ENCODE measurements at regions of chr5 and their contacts with region 1.

Region 1: DNA sequence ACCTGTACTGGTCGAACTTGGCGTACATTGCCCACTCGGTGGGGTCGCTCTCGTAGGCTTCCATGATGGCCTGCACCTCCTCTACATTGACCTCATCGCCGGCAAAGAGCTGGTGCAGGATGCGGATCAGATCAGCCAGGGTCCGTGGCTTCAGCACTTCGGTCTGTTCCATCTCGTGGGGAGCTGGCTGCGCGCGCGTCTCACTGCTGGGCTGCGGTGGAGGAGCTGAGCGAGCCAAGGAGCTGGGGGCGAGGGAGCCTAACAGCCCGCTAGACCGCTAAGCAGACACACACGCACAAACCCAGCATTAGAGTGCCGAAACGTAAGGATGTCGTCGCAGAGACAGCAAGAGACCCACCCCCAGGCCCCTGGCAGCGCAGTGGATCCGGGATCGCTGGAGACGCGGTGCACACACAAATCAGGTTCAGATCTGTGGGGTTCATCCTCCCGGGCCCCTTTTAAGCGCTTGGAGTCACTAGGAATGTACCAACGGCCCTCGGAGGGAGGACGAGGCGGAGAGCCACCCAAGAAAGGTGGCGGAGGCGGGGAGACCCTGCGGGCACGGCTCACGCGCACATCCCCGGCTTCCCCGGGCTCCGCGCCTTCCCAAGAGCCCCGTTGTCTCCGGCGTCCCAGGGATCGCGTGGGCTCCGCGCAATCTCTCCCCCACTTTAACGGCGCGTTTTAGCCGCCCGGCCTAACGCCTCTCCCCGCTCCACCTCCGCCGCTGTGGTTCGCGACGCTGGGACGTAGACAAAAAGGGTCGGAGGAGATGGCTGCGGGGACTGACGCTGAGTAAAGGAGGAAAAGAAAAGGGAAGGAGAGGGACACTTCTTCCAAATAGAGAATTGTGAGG is at the start of gene CDO1:
- DNase-seq: peak; percentile 41 to 84
- H3K4me3 ChIP-seq: peak within 1 kb of the TSS; percentile 70 to 82 (median 72)
- H3K27ac ChIP-seq: peak within 1 kb of the TSS; percentile 72
- H3K4me1 ChIP-seq: peaks cover 0 to 5% (median 1%) of the 10 kb centered on the region in 4 experiments; a peak in 5 of 7 replicates
- H3K27me3 ChIP-seq: peaks cover 0 to 22% (median 12%) of the 10 kb centered on the region in 4 experiments; a peak in 6 of 7 replicates
- CTCF ChIP-seq: no peak
- EP300 ChIP-seq: peak in 1 of 2 experiments; percentile 89; a peak in 1 of 3 replicates
- POLR2A ChIP-seq: peak; percentile 86 to 89
- RAD21 ChIP-seq: no peak
- total RNA-seq, gene CDO1: 25.4 and 26.1 TPM in 2 replicates

Region 2: DNA sequence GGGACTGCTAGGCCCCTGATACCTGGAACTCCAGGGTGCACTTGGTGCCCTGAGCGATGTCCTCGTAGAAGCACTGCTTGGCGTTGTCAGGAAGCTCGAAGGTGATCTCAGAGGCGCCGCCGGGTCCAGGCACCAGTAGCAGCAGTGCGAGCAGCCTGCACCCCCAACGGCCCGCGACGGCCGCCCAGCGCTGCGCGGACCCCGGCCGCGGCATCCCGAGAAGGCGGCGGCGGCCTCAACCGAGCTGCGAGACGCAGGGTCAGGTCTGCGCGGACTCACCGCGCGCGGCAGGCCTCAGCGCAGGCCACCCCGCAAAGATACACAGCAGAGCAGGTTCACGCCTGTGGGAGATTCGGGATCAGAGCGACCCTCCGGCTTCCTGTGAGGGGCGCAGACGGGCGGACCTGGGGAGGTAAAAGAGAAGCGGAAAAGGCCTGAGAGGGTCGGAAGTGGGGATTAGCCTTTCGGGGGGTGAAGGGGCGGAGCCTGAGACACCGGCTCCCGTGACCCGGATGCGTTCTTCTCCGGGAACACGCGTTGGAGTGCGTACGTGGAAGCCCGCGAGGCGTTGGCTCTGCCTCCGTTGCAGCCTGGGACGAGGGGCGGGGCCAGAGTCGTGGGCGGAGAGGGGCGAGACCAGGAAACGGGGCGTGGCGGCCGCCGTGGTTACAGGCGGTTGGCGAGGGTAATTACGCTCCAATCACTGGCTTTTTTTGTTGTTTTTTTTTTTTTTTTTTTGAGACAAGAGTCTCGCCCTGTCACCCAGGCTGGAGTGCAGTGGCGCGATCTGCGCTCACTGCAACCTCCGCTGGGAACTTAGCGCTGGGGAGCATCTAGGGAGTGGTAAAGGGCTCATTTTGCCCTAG is 190.6 kb before region 1 on chr5 and contains the start of gene TMED7:
- CTCF ChIA-PET with region 1: interaction called, 4 read pairs
- POLR2A ChIA-PET with region 1: interaction called, 10 read pairs
- DNase-seq: peak; percentile 85 to 95
- H3K4me3 ChIP-seq: peak within 1 kb of the TSS; percentile 86 to 96 (median 94)
- H3K27ac ChIP-seq: peak within 1 kb of the TSS; percentile 30; the same call in 1 of the 2 replicates
- H3K4me1 ChIP-seq: no peaks in the 10 kb centered on the region; a peak in 2 of 7 replicates
- H3K27me3 ChIP-seq: no peaks in the 10 kb centered on the region
- CTCF ChIP-seq: no peak; a peak in 1 of 4 replicates
- EP300 ChIP-seq: no peak
- POLR2A ChIP-seq: no peak; a peak in 1 of 3 replicates
- RAD21 ChIP-seq: no peak; a peak in 1 of 4 replicates
- total RNA-seq, gene TMED7: 72.8 and 75.2 TPM in 2 replicates

Region 3: GRCh38 chr5:115770466-115770865 is 46.0 kb before region 1 on chr5:
- CTCF ChIA-PET with region 1: interaction called, 14 read pairs
- POLR2A ChIA-PET with region 1: interaction called, 3 read pairs
- DNase-seq: peak; percentile 27 to 71
- H3K4me3 ChIP-seq: no peak overlapping the region
- H3K27ac ChIP-seq: no peak overlapping the region
- H3K4me1 ChIP-seq: no peaks in the 10 kb centered on the region
- H3K27me3 ChIP-seq: peaks cover 0 to 1% (median 0%) of the 10 kb centered on the region in 4 experiments; a peak in 1 of 7 replicates
- CTCF ChIP-seq: peak; percentile 69 to 90 (median 82)
- EP300 ChIP-seq: no peak
- POLR2A ChIP-seq: no peak
- RAD21 ChIP-seq: peak; percentile 71 to 82

Region 4: GRCh38 chr5:115785381-115786065 is 30.9 kb before region 1 on chr5:
- CTCF ChIA-PET with region 1: no interaction called
- POLR2A ChIA-PET with region 1: interaction called, 10 read pairs
- DNase-seq: peak; percentile 15 to 59
- H3K4me3 ChIP-seq: no peak overlapping the region
- H3K27ac ChIP-seq: no peak overlapping the region
- H3K4me1 ChIP-seq: no peaks in the 10 kb centered on the region; a peak in 2 of 7 replicates
- H3K27me3 ChIP-seq: no peaks in the 10 kb centered on the region
- CTCF ChIP-seq: no peak
- EP300 ChIP-seq: no peak
- POLR2A ChIP-seq: no peak
- RAD21 ChIP-seq: no peak

Region 5: GRCh38 chr5:115841382-115842088 is 25.1 kb after region 1 on chr5 and contains the starts of genes AP3S1 and ATG12:
- CTCF ChIA-PET with region 1: interaction called, 11 read pairs
- POLR2A ChIA-PET with region 1: interaction called, 11 read pairs
- DNase-seq: peak; percentile 67 to 92
- H3K4me3 ChIP-seq: peak within 1 kb of the TSS; percentile 75 to 89 (median 84)
- H3K27ac ChIP-seq: peak within 1 kb of the TSS; percentile 97
- H3K4me1 ChIP-seq: peaks cover 0 to 5% (median 1%) of the 10 kb centered on the region in 4 experiments; a peak in 2 of 7 replicates
- H3K27me3 ChIP-seq: no peaks in the 10 kb centered on the region
- CTCF ChIP-seq: no peak
- EP300 ChIP-seq: no peak
- POLR2A ChIP-seq: peak in 1 of 2 experiments; percentile 85; a peak in 2 of 3 replicates
- RAD21 ChIP-seq: no peak
- total RNA-seq, gene AP3S1: 72.7 and 93.0 TPM in 2 replicates
- total RNA-seq, gene ATG12: 49.3 and 51.4 TPM in 2 replicates